ENCODE measurements at regions of chr1 and their contacts with region 1.

Region 1: DNA sequence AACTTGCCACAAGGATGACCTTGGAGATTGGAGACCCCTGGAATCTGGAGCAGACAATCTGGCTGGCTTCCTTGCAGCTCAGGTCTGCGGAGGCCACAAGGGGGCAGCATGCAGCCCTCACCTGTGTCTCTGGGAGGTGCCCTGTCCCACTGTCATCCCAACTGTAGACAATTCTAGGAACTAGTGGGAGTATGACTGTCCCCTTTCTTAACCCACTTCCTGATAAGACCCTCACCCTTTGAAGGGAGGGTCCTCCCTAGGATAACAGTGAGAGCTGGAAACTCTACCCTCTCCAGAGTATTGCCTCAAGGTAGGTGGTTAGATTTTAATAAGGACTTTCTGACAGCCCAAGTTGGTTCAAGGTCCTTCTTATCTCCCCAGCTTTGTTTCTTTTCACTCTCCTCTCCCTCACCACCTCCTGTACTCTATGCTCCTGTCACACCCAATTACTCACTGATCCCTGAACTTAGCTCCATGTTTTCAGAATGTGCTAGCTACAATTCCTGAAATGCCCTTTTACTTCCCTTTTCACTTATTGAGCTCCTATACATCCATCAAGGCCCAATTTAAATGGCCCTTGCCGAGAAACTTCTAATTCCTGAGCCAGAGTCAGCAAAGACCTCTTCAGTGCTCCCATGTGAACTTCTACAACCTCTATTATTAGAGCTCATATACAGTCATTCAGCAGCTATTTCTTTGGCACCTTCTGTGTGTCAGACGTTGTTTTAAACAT is 9.2 kb upstream of the KCNQ4 start:
- DNase-seq: peak; percentile 75
- ATAC-seq: peak; percentile 79
- H3K4me3 Mint-ChIP-seq: no peak overlapping the region
- H3K27ac Mint-ChIP-seq: peak overlapping the region; percentile 29
- H3K4me1 Mint-ChIP-seq: peaks cover 24% of the 10 kb centered on the region
- H3K27me3 Mint-ChIP-seq: no peaks in the 10 kb centered on the region

Region 2: DNA sequence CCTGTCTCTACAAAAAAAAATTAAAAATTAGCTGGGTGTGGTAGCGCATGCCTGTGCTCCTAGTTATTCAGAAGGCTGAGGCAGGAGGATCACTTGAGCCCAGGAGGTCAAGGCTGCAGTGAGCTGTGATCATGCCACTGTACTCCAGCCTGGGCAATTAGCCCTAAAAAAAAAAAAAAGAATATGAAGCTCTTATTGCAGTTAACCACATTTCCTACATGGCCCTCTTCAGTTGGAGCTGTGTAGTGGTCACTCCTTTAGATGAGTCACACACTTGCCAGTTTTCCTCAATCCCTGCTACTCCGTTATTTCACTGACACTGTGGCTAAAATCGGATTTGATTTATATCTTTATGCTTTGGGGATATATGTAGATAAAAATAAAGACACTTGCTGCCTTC is 71.1 kb before region 1 on chr1:
- CTCF ChIA-PET with region 1: no interaction called
- DNase-seq: no peak
- ATAC-seq: no peak
- H3K4me3 Mint-ChIP-seq: no peak overlapping the region
- H3K27ac Mint-ChIP-seq: no peak overlapping the region
- H3K4me1 Mint-ChIP-seq: peaks cover 49% of the 10 kb centered on the region
- H3K27me3 Mint-ChIP-seq: no peaks in the 10 kb centered on the region

Region 3: DNA sequence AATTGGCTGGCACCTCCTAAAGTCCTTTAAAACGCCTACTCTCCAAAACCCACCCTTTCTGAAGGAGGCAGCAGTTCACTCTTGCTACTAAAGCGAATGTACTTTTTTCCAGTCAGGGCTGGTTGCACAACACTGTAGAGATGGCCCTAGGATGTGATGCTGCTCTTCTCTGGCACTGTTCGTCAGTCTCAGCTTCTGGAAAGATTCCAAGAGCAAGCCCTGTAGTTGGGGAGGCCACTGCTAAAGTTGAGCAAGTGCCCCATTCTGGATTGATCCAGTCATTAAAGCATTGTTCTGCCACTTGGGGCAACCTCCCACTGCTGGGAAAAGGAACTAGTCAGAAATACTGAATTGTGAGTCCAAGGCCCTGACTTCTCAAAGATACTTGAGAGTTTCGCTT is 19.4 kb before region 1 on chr1:
- CTCF ChIA-PET with region 1: interaction called, 21 read pairs
- DNase-seq: no peak
- ATAC-seq: no peak
- H3K4me3 Mint-ChIP-seq: no peak overlapping the region
- H3K27ac Mint-ChIP-seq: no peak overlapping the region
- H3K4me1 Mint-ChIP-seq: peaks cover 30% of the 10 kb centered on the region
- H3K27me3 Mint-ChIP-seq: no peaks in the 10 kb centered on the region

Region 4: GRCh38 chr1:40763742-40764532 is 10.5 kb before region 1 on chr1:
- CTCF ChIA-PET with region 1: interaction called, 47 read pairs
- DNase-seq: no peak
- ATAC-seq: peak; percentile 48
- H3K4me3 Mint-ChIP-seq: peak overlapping the region; percentile 5
- H3K27ac Mint-ChIP-seq: peak overlapping the region; percentile 91
- H3K4me1 Mint-ChIP-seq: peaks cover 35% of the 10 kb centered on the region
- H3K27me3 Mint-ChIP-seq: no peaks in the 10 kb centered on the region

Region 5: DNA sequence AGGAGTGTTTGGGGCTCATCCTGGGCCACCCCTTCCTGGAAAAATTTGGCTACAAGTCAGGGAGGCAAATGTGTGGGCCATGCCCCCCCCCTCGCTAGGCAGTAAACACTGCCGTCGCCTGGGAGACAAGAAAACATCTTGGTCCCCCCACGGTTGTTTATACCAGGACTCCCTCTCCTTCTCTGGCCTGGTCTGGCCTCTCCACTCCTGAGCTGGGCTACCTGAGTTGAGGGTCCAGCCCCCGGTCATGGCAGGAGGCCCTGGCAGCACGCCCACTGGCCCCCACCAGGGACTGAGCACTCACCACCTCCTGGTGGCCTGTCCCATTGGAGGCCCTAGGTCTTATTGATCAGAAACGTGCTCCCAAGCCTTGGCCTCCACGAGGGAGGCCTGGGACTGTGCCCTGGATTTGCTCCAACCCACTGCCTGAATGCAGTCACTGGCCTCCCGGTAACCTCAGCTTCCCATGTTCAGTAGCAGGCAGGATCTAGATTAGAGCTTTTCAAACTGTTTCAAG is 25.0 kb after region 1 on chr1:
- CTCF ChIA-PET with region 1: interaction called, 13 read pairs
- DNase-seq: no peak
- ATAC-seq: no peak
- H3K4me3 Mint-ChIP-seq: no peak overlapping the region
- H3K27ac Mint-ChIP-seq: no peak overlapping the region
- H3K4me1 Mint-ChIP-seq: peaks cover 39% of the 10 kb centered on the region
- H3K27me3 Mint-ChIP-seq: peaks cover 7% of the 10 kb centered on the region

Region 6: GRCh38 chr1:40840526-40841323 is 66.3 kb after region 1 on chr1:
- CTCF ChIA-PET with region 1: interaction called, 228 read pairs
- DNase-seq: peak; percentile 83
- ATAC-seq: peak; percentile 76
- H3K4me3 Mint-ChIP-seq: peak overlapping the region; percentile 5
- H3K27ac Mint-ChIP-seq: peak overlapping the region; percentile 85
- H3K4me1 Mint-ChIP-seq: peaks cover 34% of the 10 kb centered on the region
- H3K27me3 Mint-ChIP-seq: no peaks in the 10 kb centered on the region

Measured in activated CD8-positive, alpha-beta memory T cell treated with anti-CD3 and anti-CD28 coated beads, Interleukin-2, amount 10 ng/mL, durations not matched to agents 7 days and 5 days (primary cell).